Caco-2 (cell line): ENCODE measurements at regions of chr7 and their contacts with region 1.

Region 1: DNA sequence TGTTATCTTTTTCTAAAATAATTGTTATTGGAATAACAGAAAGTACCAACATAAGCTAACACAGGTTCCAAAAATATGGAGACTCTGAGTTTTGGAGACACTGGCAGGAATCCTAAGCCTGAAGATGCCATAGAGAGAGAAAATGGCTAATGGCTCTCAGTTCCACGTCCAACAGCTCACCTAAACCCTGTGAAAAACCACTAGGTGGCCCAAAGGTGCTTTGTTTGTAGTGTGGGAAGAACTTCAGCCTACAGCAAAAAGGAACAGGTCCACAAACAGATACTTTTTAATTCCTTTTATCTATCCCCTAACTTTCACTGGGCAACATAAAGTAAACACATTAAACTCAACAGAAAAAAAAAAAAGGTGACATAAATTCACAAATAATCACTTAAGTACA is 272.3 kb downstream of the SEMA3D start:
- DNase-seq: peak in 1 of 2 experiments; percentile 45
- H3K4me3 ChIP-seq: no peak overlapping the region
- H3K4me3 Mint-ChIP-seq: no peak overlapping the region
- H3K27ac Mint-ChIP-seq: no peak overlapping the region
- H3K4me1 ChIP-seq: peaks cover 30% of the 10 kb centered on the region
- H3K4me1 Mint-ChIP-seq: peaks cover 22% of the 10 kb centered on the region
- H3K27me3 ChIP-seq: no peaks in the 10 kb centered on the region
- H3K27me3 Mint-ChIP-seq: no peaks in the 10 kb centered on the region
- CTCF ChIP-seq: peak; percentile 26 to 29

Region 2: GRCh38 chr7:84783141-84783778 is 131.3 kb before region 1 on chr7:
- CTCF ChIA-PET with region 1: no interaction called
- POLR2A ChIA-PET with region 1: no interaction called
- intact Hi-C with region 1: loop called (anchors 10 kb)
- DNase-seq: peak; percentile 40 to 52
- H3K4me3 ChIP-seq: no peak overlapping the region
- H3K4me3 Mint-ChIP-seq: no peak overlapping the region
- H3K27ac Mint-ChIP-seq: no peak overlapping the region
- H3K4me1 ChIP-seq: peaks cover 18% of the 10 kb centered on the region
- H3K4me1 Mint-ChIP-seq: no peaks in the 10 kb centered on the region
- H3K27me3 ChIP-seq: no peaks in the 10 kb centered on the region
- H3K27me3 Mint-ChIP-seq: no peaks in the 10 kb centered on the region
- CTCF ChIP-seq: no peak

Region 3: GRCh38 chr7:84829719-84830118 is 84.9 kb before region 1 on chr7:
- CTCF ChIA-PET with region 1: no interaction called
- POLR2A ChIA-PET with region 1: no interaction called
- intact Hi-C with region 1: no loop called
- DNase-seq: no peak
- H3K4me3 ChIP-seq: no peak overlapping the region
- H3K4me3 Mint-ChIP-seq: no peak overlapping the region
- H3K27ac Mint-ChIP-seq: no peak overlapping the region
- H3K4me1 ChIP-seq: no peaks in the 10 kb centered on the region
- H3K4me1 Mint-ChIP-seq: no peaks in the 10 kb centered on the region
- H3K27me3 ChIP-seq: no peaks in the 10 kb centered on the region
- H3K27me3 Mint-ChIP-seq: peaks cover 8% of the 10 kb centered on the region
- CTCF ChIP-seq: no peak

Region 4: DNA sequence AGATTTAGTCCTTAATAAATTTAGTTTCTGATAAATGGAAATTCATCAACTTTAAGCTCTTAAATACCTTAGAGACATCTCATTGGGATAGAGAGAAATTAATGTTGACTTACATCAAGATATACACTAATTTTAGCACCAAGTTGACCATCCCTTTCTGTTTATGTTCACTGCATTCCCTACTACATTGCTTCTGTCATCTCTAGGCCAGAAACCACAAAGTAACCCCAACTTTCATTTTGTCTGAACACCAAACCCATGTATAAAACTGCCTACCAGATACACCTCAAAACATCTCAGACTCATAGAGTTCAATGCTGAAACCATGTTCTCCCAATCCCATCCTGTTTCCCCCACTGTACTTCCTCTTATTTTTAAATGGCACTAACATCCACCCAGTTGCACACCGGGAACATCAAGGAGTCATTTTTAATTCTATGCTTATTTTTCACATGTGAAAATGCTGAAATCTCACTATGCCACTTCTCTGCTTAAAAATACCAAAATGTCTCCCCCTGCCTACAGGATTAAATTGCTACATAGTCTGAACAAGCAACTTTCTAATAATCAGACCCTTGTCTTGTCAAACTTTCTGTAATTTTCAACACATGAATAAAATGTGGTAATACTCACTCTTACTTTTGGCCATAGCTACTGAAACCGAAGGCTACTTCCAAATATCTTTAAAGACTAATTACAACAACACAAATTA is 70.6 kb after region 1 on chr7:
- CTCF ChIA-PET with region 1: no interaction called
- POLR2A ChIA-PET with region 1: no interaction called
- intact Hi-C with region 1: loop called (anchors 1 kb)
- DNase-seq: no peak
- H3K4me3 ChIP-seq: no peak overlapping the region
- H3K4me3 Mint-ChIP-seq: no peak overlapping the region
- H3K27ac Mint-ChIP-seq: no peak overlapping the region
- H3K4me1 ChIP-seq: no peaks in the 10 kb centered on the region
- H3K4me1 Mint-ChIP-seq: no peaks in the 10 kb centered on the region
- H3K27me3 ChIP-seq: no peaks in the 10 kb centered on the region
- H3K27me3 Mint-ChIP-seq: peaks cover 3% of the 10 kb centered on the region
- CTCF ChIP-seq: no peak